PC-9 (cell line): ENCODE measurements at regions of chr12 and their contacts with region 1.

Region 1: GRCh38 chr12:116135209-116135930 is 142.1 kb downstream of the MED13L start:
- DNase-seq: peak; percentile 20 to 50
- H3K4me3 ChIP-seq: no peak overlapping the region
- H3K27ac ChIP-seq: peak overlapping the region; percentile 28; the same call in 1 of the 2 replicates
- H3K4me1 ChIP-seq: peaks cover 15% of the 10 kb centered on the region
- H3K27me3 ChIP-seq: no peaks in the 10 kb centered on the region
- CTCF ChIP-seq: no peak

Region 2: GRCh38 chr12:116164250-116165035 is 29.1 kb after region 1 on chr12:
- CTCF ChIA-PET with region 1: interaction called, 11 read pairs
- POLR2A ChIA-PET with region 1: no interaction called
- intact Hi-C with region 1: no loop called
- DNase-seq: no peak
- H3K4me3 ChIP-seq: no peak overlapping the region; the same call in 1 of the 2 replicates
- H3K27ac ChIP-seq: peak overlapping the region; percentile 59
- H3K4me1 ChIP-seq: peaks cover 60% of the 10 kb centered on the region
- H3K27me3 ChIP-seq: no peaks in the 10 kb centered on the region
- CTCF ChIP-seq: no peak

Region 3: GRCh38 chr12:116202940-116203339 is 67.6 kb after region 1 on chr12:
- CTCF ChIA-PET with region 1: no interaction called
- POLR2A ChIA-PET with region 1: interaction called, 20 read pairs
- intact Hi-C with region 1: no loop called
- DNase-seq: no peak
- H3K4me3 ChIP-seq: no peak overlapping the region
- H3K27ac ChIP-seq: no peak overlapping the region
- H3K4me1 ChIP-seq: no peaks in the 10 kb centered on the region
- H3K27me3 ChIP-seq: no peaks in the 10 kb centered on the region
- CTCF ChIP-seq: no peak

Region 4: GRCh38 chr12:116423094-116423493 is 287.7 kb after region 1 on chr12:
- CTCF ChIA-PET with region 1: no interaction called
- POLR2A ChIA-PET with region 1: no interaction called
- intact Hi-C with region 1: no loop called
- DNase-seq: peak in 1 of 2 experiments; percentile 85
- H3K4me3 ChIP-seq: no peak overlapping the region
- H3K27ac ChIP-seq: peak overlapping the region; percentile 72
- H3K4me1 ChIP-seq: peaks cover 45% of the 10 kb centered on the region
- H3K27me3 ChIP-seq: no peaks in the 10 kb centered on the region
- CTCF ChIP-seq: no peak

Region 5: GRCh38 chr12:116687888-116688287 is 552.5 kb after region 1 on chr12:
- CTCF ChIA-PET with region 1: interaction called, 13 read pairs
- POLR2A ChIA-PET with region 1: no interaction called
- intact Hi-C with region 1: no loop called
- DNase-seq: no peak
- H3K4me3 ChIP-seq: no peak overlapping the region
- H3K27ac ChIP-seq: no peak overlapping the region
- H3K4me1 ChIP-seq: no peaks in the 10 kb centered on the region
- H3K27me3 ChIP-seq: no peaks in the 10 kb centered on the region
- CTCF ChIP-seq: peak; percentile 60